MCF 10A (cell line): ENCODE measurements at regions of chr10 and their contacts with region 1.

Region 1: GRCh38 chr10:75401569-75402485 is at the start of gene ZNF503:
- DNase-seq: peak; percentile 97
- H3K4me3 Mint-ChIP-seq: peak within 1 kb of the TSS; percentile 80
- H3K27ac Mint-ChIP-seq: peak within 1 kb of the TSS; percentile 51
- H3K4me1 Mint-ChIP-seq: peaks cover 5% of the 10 kb centered on the region
- H3K27me3 Mint-ChIP-seq: no peaks in the 10 kb centered on the region
- CTCF ChIP-seq: no peak
- total RNA-seq, gene ZNF503: 7.3 and 8.1 TPM in 2 replicates

Region 2: GRCh38 chr10:75358835-75359431 is 42.9 kb before region 1 on chr10:
- CTCF ChIA-PET with region 1: interaction called, 3 read pairs
- POLR2A ChIA-PET with region 1: interaction called, 21 read pairs
- intact Hi-C with region 1: no loop called
- DNase-seq: peak; percentile 92
- H3K4me3 Mint-ChIP-seq: peak overlapping the region; percentile 65
- H3K27ac Mint-ChIP-seq: peak overlapping the region; percentile 84
- H3K4me1 Mint-ChIP-seq: peaks cover 21% of the 10 kb centered on the region
- H3K27me3 Mint-ChIP-seq: no peaks in the 10 kb centered on the region
- CTCF ChIP-seq: no peak

Region 3: GRCh38 chr10:75530337-75530736 is 128.5 kb after region 1 on chr10:
- CTCF ChIA-PET with region 1: no interaction called
- POLR2A ChIA-PET with region 1: no interaction called
- intact Hi-C with region 1: loop called (anchors 10 kb)
- DNase-seq: peak; percentile 71
- H3K4me3 Mint-ChIP-seq: no peak overlapping the region
- H3K27ac Mint-ChIP-seq: no peak overlapping the region
- H3K4me1 Mint-ChIP-seq: peaks cover 2% of the 10 kb centered on the region
- H3K27me3 Mint-ChIP-seq: no peaks in the 10 kb centered on the region
- CTCF ChIP-seq: no peak

Region 4: DNA sequence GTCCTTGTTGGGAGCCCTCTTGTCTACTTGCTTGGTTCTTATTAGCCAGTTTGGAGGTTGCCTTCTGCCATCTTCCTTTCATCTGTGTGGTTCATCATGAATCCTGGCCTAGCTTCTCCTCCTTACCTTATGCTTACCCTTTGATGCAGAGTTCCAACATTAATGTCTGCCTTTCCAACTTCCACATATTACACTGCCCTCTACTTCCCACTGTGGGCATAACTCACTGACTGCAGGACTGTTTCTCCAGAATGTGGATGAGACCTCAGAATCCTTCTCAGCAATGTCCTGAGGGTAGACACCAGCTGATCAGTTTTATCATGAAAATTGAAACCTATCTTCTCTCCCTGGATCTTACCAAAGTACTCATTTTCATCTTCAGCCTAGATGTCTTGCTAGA is 520.6 kb after region 1 on chr10:
- CTCF ChIA-PET with region 1: interaction called, 6 read pairs
- POLR2A ChIA-PET with region 1: interaction called, 4 read pairs
- intact Hi-C with region 1: loop called (anchors 1 kb)
- DNase-seq: peak; percentile 9
- H3K4me3 Mint-ChIP-seq: no peak overlapping the region
- H3K27ac Mint-ChIP-seq: no peak overlapping the region
- H3K4me1 Mint-ChIP-seq: no peaks in the 10 kb centered on the region
- H3K27me3 Mint-ChIP-seq: peaks cover 12% of the 10 kb centered on the region
- CTCF ChIP-seq: no peak

Region 5: DNA sequence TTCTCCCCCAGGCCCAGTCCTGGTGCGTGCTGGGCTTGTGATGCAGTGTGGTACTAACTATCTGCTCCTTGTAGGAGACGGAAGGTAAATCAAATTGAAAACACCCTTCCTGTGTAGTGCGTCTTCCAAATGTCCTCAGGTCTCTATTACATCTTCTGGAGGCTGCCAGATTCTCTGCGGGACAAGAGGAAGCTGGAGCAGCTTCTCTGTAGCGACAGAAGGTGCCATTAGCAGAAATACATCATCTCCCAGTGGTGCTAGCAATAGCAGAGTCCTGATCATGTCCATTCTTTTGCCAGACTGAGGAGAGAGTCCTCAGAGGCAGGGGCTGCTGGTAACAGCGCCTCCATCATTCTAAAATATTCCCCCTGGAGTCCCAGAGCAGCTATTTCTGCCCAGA is 704.8 kb after region 1 on chr10:
- CTCF ChIA-PET with region 1: no interaction called
- POLR2A ChIA-PET with region 1: interaction called, 3 read pairs
- intact Hi-C with region 1: loop called (anchors 5 kb)
- DNase-seq: no peak
- H3K4me3 Mint-ChIP-seq: no peak overlapping the region
- H3K27ac Mint-ChIP-seq: no peak overlapping the region
- H3K4me1 Mint-ChIP-seq: peaks cover 17% of the 10 kb centered on the region
- H3K27me3 Mint-ChIP-seq: no peaks in the 10 kb centered on the region
- CTCF ChIP-seq: no peak

Region 6: GRCh38 chr10:76984559-76985443 is 1583.0 kb after region 1 on chr10:
- CTCF ChIA-PET with region 1: no interaction called
- POLR2A ChIA-PET with region 1: no interaction called
- intact Hi-C with region 1: loop called (anchors 5 kb)
- DNase-seq: peak; percentile 76
- H3K4me3 Mint-ChIP-seq: no peak overlapping the region
- H3K27ac Mint-ChIP-seq: no peak overlapping the region
- H3K4me1 Mint-ChIP-seq: no peaks in the 10 kb centered on the region
- H3K27me3 Mint-ChIP-seq: no peaks in the 10 kb centered on the region
- CTCF ChIP-seq: peak; percentile 93